ENCODE measurements at regions of chr22 and their contacts with region 1.

Region 1: GRCh38 chr22:20156611-20157429 is 6.0 kb upstream of the CCDC188 start:
- DNase-seq: peak; percentile 92
- ATAC-seq: peak; percentile 91
- H3K4me3 Mint-ChIP-seq: no peak overlapping the region
- H3K27ac Mint-ChIP-seq: no peak overlapping the region
- H3K4me1 Mint-ChIP-seq: peaks cover 2% of the 10 kb centered on the region
- H3K27me3 Mint-ChIP-seq: no peaks in the 10 kb centered on the region

Region 2: DNA sequence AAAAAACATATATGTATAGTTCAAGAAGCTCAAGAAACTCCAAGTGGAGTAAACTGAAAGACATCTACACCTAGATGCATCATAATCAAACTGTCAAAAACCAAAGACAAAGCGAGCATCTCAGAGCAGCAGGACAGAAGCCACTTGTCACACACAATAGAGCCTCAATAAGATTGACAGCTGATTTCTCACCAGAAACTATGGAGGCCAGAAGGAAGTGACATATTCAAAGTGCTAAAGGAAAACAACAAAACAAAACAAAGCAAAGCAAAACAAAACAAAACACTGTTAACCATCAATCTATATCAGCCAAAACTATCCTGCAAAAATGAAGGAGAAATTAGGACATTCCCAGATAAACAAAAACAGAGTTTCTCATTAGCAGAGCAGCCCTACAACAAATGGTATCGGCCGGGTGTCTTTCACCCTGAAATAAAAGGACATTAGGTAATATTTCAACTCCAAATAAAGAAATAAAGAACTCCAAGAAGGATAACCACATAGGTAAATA is 508.3 kb before region 1 on chr22:
- CTCF ChIA-PET with region 1: no interaction called
- POLR2A ChIA-PET with region 1: no interaction called
- intact Hi-C with region 1: no loop called
- DNase-seq: no peak
- ATAC-seq: no peak
- H3K4me3 Mint-ChIP-seq: no peak overlapping the region
- H3K27ac Mint-ChIP-seq: no peak overlapping the region
- H3K4me1 Mint-ChIP-seq: no peaks in the 10 kb centered on the region
- H3K27me3 Mint-ChIP-seq: peaks cover 11% of the 10 kb centered on the region

Region 3: DNA sequence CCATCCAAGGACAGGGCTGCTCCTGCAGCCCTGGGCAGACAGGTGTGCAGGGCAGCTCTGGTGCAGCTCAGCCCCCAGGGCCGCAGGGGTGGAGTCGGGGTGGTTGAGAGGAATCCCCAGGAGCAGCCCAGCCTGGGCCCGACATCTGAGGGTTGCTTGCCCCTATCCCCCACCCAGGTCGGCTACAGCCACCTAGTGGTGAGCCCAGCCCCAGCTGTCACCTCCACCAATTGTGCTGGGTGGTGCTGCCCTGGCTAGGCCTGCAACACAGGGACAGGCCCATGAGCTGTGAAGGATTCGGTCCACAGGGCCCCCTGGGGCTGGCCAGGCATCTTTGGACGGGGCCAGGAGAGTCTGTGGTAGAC is 81.7 kb after region 1 on chr22:
- CTCF ChIA-PET with region 1: interaction called, 5 read pairs
- POLR2A ChIA-PET with region 1: no interaction called
- intact Hi-C with region 1: loop called in 1 of 2 experiments (anchors 1 kb)
- DNase-seq: peak; percentile 82
- ATAC-seq: peak; percentile 81
- H3K4me3 Mint-ChIP-seq: no peak overlapping the region
- H3K27ac Mint-ChIP-seq: peak overlapping the region; percentile 65
- H3K4me1 Mint-ChIP-seq: peaks cover 17% of the 10 kb centered on the region
- H3K27me3 Mint-ChIP-seq: no peaks in the 10 kb centered on the region

Region 4: GRCh38 chr22:20268279-20269012 is 111.6 kb after region 1 on chr22 and contains the start of gene RTN4R:
- CTCF ChIA-PET with region 1: interaction called, 4 read pairs
- POLR2A ChIA-PET with region 1: interaction called, 3 read pairs
- intact Hi-C with region 1: loop called (anchors 1 to 5 kb)
- DNase-seq: peak; percentile 76
- ATAC-seq: peak; percentile 89
- H3K4me3 Mint-ChIP-seq: peak within 1 kb of the TSS; percentile 50
- H3K27ac Mint-ChIP-seq: no peak within 1 kb of the TSS
- H3K4me1 Mint-ChIP-seq: no peaks in the 10 kb centered on the region
- H3K27me3 Mint-ChIP-seq: peaks cover 4% of the 10 kb centered on the region
- total RNA-seq, gene RTN4R: 2.2 to 2.3 TPM

Region 5: GRCh38 chr22:20284471-20285086 is 127.8 kb after region 1 on chr22:
- CTCF ChIA-PET with region 1: interaction called, 9 read pairs
- POLR2A ChIA-PET with region 1: no interaction called
- intact Hi-C with region 1: loop called (anchors 1 kb)
- DNase-seq: no peak
- ATAC-seq: no peak
- H3K4me3 Mint-ChIP-seq: no peak overlapping the region
- H3K27ac Mint-ChIP-seq: no peak overlapping the region
- H3K4me1 Mint-ChIP-seq: no peaks in the 10 kb centered on the region
- H3K27me3 Mint-ChIP-seq: no peaks in the 10 kb centered on the region

Region 6: GRCh38 chr22:20456064-20456721 is 299.4 kb after region 1 on chr22:
- CTCF ChIA-PET with region 1: interaction called, 4 read pairs
- POLR2A ChIA-PET with region 1: no interaction called
- intact Hi-C with region 1: loop called in 1 of 2 experiments (anchors 1 kb)
- DNase-seq: peak; percentile 88
- ATAC-seq: peak; percentile 95
- H3K4me3 Mint-ChIP-seq: no peak overlapping the region
- H3K27ac Mint-ChIP-seq: peak overlapping the region; percentile 59
- H3K4me1 Mint-ChIP-seq: peaks cover 20% of the 10 kb centered on the region
- H3K27me3 Mint-ChIP-seq: no peaks in the 10 kb centered on the region

Measured in activated CD4-positive, alpha-beta T cell treated with anti-CD3 and anti-CD28 coated beads for 36 hours (primary cell).